ENCODE measurements at regions of chr22 and their contacts with region 1.

Region 1: GRCh38 chr22:22207845-22208564 is 36.6 kb upstream of the VPREB1 start:
- DNase-seq: peak; percentile 38 to 70
- ATAC-seq: peak; percentile 82 to 94
- H3K4me3 ChIP-seq: no peak overlapping the region
- H3K27ac ChIP-seq: no peak overlapping the region
- H3K4me1 ChIP-seq: peaks cover 7% of the 10 kb centered on the region; the same call in 2 of the 3 replicates
- CTCF ChIP-seq: peak; percentile 53
- EP300 ChIP-seq: no peak
- POLR2A ChIP-seq: no peak
- RAD21 ChIP-seq: peak; percentile 70 to 77

Region 2: DNA sequence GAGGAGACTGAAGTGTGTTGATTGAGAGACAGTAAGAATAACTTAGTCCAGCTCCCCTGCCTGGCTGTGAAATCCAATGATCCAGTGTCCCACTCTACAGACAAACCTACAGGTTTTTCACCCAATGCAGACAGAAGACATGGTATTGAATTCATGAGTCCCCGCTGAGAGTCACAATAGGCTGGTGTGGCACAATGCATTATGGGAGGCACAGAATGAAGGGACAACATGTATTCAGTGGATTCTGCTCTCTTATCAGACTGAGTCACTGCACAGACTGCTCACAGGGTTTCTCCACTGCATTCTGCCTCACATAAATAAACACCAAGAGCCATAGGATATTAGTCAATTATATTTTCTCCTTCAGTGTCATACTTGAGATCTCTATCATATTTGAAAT is 170.3 kb before region 1 on chr22:
- CTCF ChIA-PET with region 1: no interaction called
- POLR2A ChIA-PET with region 1: no interaction called
- DNase-seq: no peak
- ATAC-seq: no peak; a peak in 1 of 6 replicates
- H3K4me3 ChIP-seq: no peak overlapping the region
- H3K27ac ChIP-seq: no peak overlapping the region
- H3K4me1 ChIP-seq: no peaks in the 10 kb centered on the region
- CTCF ChIP-seq: no peak
- EP300 ChIP-seq: no peak
- POLR2A ChIP-seq: no peak
- RAD21 ChIP-seq: no peak

Region 3: DNA sequence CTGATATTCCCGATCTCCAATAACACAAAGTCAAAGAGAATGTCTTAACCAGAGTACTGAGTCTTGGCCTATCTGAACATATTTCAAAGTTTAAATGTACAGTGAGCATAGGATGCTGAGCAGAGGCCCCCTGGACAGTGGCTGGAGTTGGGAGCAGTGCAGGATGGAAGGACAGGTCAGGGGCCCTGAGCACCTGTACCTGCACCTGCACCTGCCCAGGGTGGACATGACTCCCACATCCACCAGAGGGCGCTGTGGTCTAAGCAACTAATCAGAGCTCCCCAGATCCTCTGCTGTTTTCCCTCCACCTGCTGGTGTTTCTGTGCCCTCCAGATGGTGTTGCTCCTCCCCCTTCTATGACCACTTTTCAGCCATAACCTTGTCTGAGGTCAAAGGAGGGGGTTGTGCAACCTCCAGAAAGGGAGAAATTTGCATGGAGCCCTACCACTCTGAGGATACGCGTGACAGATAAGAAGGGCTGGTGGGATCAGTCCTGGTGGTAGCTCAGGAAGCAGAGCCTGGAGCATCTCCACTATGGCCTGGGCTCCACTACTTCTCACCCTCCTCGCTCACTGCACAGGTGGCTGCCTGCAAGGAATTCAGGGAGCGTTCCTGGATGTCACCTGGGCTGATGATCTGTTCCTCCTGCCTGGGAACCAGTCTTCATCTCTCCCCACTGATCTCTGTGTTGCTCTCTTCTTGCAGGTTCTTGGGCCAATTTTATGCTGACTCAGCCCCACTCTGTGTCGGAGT is 12.6 kb before region 1 on chr22:
- CTCF ChIA-PET with region 1: interaction called, 34 read pairs
- POLR2A ChIA-PET with region 1: no interaction called
- DNase-seq: peak; percentile 64 to 75
- ATAC-seq: peak; percentile 89 to 99
- H3K4me3 ChIP-seq: no peak overlapping the region
- H3K27ac ChIP-seq: no peak overlapping the region
- H3K4me1 ChIP-seq: no peaks in the 10 kb centered on the region
- CTCF ChIP-seq: peak; percentile 64
- EP300 ChIP-seq: no peak
- POLR2A ChIP-seq: no peak
- RAD21 ChIP-seq: peak; percentile 54 to 61

Measured in A549 (cell line).